HEK293 (cell line): ENCODE measurements at regions of chr11 and their contacts with region 1.

Region 1: DNA sequence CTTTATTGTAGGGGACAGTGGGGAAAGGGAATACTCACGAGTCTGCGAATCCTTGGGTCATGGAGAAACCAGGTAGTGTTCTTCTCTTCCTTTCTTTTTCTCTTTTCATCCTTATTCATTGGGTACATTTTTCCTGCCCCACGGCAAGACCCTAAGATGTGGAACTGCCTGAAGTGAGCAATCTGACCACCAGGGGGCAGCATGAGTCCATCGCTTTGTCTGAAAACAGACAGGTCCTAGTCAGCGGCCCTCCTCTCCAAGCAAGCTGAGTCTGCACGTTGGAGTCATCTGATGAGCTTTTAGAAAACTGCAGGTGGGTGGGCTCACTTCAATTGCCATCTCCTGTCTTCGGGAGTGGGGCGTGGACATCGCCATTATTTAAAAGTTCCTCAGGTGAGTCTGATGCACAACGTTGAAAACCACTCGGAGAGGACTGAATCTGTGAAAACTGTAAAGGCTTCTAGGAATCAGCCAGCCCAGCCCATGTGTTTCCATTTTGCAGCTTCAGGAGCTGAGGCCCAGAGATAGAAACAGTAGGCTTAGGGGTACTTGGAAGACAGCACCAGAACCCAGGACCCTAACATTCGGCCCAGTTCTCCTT is 34.0 kb upstream of the FBXO3 start:
- H3K4me3 ChIP-seq: no peak overlapping the region
- H3K27ac ChIP-seq: no peak overlapping the region
- H3K4me1 ChIP-seq: no peaks in the 10 kb centered on the region
- CTCF ChIP-seq: peak; percentile 74

Region 2: DNA sequence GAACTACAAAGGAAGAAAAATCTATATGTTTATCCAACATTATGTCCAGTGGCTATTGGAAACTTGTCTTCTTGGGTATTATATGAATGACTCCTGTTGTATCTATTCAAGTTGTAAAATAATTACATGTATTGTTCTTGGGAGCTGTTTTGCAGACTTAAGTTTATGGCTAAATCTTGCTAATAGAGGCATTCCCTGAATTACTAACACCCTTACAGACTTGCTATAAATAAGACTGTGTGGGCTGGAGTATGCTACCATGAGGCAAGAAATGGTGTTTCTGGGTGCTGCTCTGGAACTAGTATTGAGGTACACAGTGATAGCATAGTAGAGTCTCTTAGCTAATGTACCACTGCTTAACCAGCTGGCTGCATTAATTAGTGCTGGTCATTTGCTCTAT is 396.1 kb before region 1 on chr11:
- CTCF ChIA-PET with region 1: no interaction called
- POLR2A ChIA-PET with region 1: no interaction called
- H3K4me3 ChIP-seq: no peak overlapping the region
- H3K27ac ChIP-seq: no peak overlapping the region
- H3K4me1 ChIP-seq: no peaks in the 10 kb centered on the region
- CTCF ChIP-seq: no peak

Region 3: DNA sequence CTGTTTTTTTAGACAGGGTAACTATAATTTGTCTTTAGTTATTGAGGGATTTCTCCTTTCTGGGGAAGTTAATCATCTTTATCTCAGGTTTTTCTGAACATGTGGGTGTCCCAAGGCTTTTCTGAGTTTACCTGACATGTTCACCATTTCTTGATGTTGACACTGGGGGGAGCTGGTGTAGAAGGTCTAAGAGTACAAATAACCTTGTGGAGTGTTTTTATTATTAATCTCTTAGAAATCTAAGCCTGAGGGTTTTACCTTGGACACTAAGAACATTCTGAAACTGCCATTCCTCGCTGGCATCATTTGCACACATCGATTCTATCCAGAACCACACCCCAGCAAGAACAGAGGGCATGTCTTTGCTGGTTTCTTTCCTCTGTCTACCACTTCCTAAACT is 92.1 kb before region 1 on chr11:
- CTCF ChIA-PET with region 1: interaction called, 22 read pairs
- POLR2A ChIA-PET with region 1: no interaction called
- H3K4me3 ChIP-seq: no peak overlapping the region
- H3K27ac ChIP-seq: no peak overlapping the region
- H3K4me1 ChIP-seq: no peaks in the 10 kb centered on the region
- CTCF ChIP-seq: no peak

Region 4: DNA sequence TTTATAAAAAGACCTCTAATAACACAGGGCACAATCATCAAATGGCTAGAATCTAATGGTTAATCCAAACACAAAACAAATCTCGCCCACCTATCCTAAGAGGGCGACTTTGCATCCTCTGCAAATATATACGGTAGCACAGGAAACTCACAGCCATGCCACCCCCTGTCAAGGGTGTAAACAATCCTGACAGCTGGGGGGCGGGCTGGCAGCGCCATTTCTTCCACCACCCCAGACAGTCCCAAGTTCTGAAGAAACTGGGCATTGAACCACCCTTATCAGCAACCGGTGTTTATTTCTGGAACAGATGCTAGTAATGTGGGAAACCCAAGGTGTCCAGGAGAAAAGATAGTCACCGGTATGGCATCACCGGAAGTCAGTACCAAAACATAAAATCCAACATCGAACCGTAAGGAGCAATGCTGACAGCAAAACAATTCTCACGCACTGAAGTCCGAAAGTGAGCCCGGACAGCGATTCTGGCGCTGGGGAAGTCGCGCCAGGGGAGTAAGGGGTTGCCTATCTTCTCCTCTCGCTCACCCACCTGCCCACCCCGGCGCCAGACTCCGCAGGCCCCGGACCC is 34.8 kb before region 1 on chr11:
- CTCF ChIA-PET with region 1: interaction called, 10 read pairs
- POLR2A ChIA-PET with region 1: no interaction called
- H3K4me3 ChIP-seq: peak overlapping the region; percentile 97
- H3K27ac ChIP-seq: peak overlapping the region; percentile 35; the same call in 1 of the 2 replicates
- H3K4me1 ChIP-seq: peaks cover 7% of the 10 kb centered on the region
- CTCF ChIP-seq: no peak

Region 5: DNA sequence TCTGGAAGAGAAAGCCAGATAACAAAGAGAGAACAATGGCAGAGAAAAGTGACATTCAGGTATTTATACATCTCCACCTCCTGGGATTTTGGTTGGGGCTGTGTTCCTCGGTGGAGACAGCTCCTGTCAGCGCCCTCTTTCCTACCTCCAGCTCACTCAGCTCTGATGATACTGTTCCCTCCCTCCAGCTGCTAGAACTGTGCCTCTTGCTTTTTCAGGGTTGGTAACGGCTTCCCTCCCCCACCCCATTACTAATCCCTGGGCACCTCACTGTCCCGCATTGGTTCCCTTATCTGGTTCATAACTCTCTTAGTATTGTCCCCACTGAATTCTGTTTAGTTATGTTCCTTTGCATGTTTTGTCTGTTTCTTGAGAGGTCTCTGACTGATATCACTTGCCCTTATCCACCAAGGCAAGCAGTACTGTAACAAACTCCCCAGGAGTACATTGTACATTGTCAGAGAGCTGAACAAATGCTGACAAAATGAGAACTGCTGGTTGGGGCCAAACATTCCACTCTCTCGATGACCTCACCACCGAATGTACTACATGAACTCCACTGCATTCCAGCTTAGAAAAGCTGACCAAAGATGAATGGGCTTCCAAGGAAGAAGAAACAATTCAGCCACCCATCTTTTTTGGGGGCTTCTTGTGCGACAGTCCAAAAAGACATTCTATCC is 28.3 kb before region 1 on chr11:
- CTCF ChIA-PET with region 1: interaction called, 18 read pairs
- POLR2A ChIA-PET with region 1: no interaction called
- H3K4me3 ChIP-seq: no peak overlapping the region; the same call in 1 of the 2 replicates
- H3K27ac ChIP-seq: no peak overlapping the region
- H3K4me1 ChIP-seq: peaks cover 16% of the 10 kb centered on the region
- CTCF ChIP-seq: no peak

Region 6: DNA sequence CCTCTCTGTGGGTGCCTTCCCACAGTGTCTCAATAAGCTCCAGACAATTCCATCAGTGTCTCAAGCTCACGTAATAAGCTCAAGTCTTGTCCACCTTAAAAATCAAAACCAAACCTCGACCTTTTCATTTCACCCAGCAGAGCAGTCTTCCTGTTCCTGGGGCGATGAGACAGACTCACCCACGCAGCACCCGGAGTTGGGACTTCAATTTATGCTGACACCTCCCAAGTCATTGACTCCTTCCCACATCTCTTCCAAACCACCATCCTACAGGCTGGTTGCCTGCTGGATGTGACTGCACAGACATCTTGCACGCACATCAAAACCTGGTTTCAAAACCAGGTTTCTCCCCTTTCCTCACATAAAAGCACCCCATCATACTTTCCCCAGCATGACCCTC is 10.9 kb after region 1 on chr11:
- CTCF ChIA-PET with region 1: interaction called, 269 read pairs
- POLR2A ChIA-PET with region 1: no interaction called
- H3K4me3 ChIP-seq: no peak overlapping the region
- H3K27ac ChIP-seq: no peak overlapping the region
- H3K4me1 ChIP-seq: no peaks in the 10 kb centered on the region
- CTCF ChIP-seq: no peak

Region 7: DNA sequence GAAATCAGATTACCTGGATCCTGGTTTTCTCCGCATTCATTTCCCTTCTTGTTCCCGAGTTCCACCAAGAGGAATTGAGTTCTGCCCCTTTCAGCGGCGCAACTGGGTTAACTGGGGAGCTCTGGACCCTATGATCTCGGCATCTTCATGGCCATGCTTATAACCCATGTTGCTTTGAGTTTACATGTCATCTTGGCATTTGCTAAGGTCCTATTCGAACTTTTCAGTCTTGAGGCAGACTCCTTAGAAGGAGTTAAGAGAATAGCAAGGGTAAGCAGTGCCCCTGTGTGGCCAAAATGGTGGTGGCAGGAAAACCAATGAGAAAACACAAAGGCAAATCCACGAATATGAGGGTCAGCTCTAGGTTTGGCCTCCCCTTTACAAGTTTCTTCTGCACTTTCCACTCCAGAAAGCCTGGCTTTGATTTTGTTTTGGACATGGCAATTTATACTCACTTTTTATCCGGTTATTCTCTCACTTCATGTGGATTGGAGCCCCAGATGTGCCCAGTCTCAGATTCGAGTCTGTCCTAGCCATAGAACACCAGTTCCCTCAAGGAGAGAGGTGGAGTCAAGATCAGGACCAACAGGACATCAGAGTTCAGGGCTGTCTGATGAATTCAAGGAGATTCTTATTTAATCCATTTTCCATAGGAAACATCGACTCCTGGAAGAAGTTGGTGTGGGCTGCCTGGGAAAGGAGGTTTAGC is 21.3 kb after region 1 on chr11:
- CTCF ChIA-PET with region 1: interaction called, 269 read pairs
- POLR2A ChIA-PET with region 1: no interaction called
- H3K4me3 ChIP-seq: peak overlapping the region; percentile 31
- H3K27ac ChIP-seq: no peak overlapping the region
- H3K4me1 ChIP-seq: no peaks in the 10 kb centered on the region
- CTCF ChIP-seq: peak; percentile 64; the same call in 1 of the 2 replicates

Region 8: DNA sequence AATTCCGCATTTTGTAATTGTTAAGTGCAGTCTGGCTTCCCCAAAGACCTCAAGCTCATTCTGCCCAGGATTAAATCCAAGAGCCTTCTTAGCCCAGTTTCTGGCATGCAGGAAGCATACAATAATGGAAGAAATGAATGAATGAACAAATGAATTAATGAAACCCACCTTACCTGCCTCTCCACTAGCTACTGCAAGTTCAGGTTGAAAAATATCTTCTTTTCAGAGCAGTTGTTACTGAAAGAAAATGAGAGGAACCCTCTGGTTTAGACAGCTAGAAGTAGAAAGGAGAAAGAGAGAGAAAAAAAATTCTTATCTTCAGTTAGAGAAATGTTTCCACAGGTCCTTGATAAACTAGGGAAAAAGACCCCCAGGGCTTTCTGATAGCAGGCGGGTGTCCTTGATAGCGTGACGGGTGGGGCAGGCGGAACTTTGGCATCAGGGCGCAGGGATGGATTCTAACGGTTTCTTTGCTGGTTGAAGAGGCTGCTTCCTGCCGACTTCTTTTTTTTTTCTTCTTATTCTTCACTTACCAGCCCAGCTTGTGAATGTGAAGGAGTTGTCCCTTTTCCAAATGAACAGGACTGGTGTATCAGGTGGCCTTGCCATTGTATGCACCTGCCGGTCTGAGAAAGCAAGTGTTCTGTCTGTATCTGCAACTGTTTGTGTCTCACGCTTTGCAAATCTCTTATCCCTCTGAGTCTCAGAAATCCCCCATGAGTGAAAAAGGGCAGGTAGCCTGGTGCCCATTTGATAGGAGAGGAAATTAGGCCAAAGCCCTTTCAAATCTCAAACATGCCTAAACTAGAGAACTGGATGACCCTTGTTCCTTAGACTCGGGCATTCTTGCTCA is 73.5 kb after region 1 on chr11:
- CTCF ChIA-PET with region 1: interaction called, 10 read pairs
- POLR2A ChIA-PET with region 1: no interaction called
- H3K4me3 ChIP-seq: no peak overlapping the region
- H3K27ac ChIP-seq: no peak overlapping the region
- H3K4me1 ChIP-seq: no peaks in the 10 kb centered on the region
- CTCF ChIP-seq: no peak